AG04449 (cell line): ENCODE measurements at regions of chr6 and their contacts with region 1.

Region 1: DNA sequence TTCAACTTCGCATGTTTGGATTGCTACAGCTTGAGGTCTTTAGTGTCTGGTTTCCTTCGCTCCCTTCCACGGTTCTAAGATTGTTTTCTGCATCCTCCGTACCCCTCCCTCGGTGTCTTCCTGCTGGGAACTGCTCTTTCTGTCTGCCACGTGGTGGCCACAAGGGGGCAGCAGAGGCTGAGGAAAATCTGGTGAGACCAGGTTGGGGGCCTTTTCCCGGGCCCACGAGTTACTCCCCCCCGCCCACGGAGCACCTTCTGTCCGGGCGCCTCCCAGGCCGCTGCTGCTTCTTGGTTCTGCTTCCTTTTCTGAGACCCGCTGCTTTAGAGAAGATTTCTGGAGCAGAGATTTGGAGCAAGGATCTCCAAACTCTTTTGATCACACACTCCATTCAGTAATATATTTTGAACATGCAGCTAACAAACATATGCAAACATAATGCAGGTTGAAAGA is 21.1 kb upstream of the NOTCH4 start:
- DNase-seq: no peak
- H3K4me3 ChIP-seq: no peak overlapping the region
- CTCF ChIP-seq: peak; percentile 85

Region 2: GRCh38 chr6:32234934-32235333 is 10.0 kb before region 1 on chr6:
- CTCF ChIA-PET with region 1: interaction called, 18 read pairs
- POLR2A ChIA-PET with region 1: no interaction called
- DNase-seq: no peak
- H3K4me3 ChIP-seq: no peak overlapping the region
- CTCF ChIP-seq: no peak

Region 3: GRCh38 chr6:32255199-32256153 is 10.5 kb after region 1 on chr6:
- CTCF ChIA-PET with region 1: interaction called, 60 read pairs
- POLR2A ChIA-PET with region 1: no interaction called
- DNase-seq: peak; percentile 59
- H3K4me3 ChIP-seq: peak overlapping the region; percentile 53
- CTCF ChIP-seq: peak; percentile 89

Region 4: DNA sequence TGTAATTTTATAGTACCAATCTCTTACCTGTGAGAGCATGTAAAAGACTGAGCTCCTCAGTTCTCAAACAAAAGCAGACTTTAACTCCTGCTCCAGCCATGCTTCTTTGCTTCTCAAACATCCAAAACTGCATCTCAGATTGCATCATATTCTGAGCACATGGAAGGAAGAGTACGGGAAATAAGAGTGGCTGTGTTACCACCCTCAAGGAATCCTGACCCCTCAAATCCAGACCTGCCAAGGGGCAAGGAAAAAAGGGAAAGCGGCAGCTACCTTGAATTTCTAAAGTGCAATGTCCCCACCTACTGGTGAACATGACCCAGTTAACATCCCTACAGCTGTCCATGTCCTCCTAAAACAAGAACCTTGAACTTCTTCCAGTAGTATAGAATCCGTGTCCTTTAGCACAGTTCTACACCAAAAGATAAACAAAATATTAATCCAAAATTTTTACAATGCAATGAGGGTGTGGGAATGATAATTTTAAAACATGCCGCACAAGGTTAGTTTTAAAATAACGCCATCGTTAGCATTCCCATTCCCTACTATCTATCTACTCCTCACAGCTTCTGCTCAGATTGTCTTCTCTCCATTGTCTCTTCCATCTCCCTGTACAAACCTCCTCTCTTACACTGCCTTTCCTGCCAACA is 455.5 kb after region 1 on chr6:
- CTCF ChIA-PET with region 1: interaction called, 10 read pairs
- POLR2A ChIA-PET with region 1: no interaction called
- DNase-seq: no peak
- H3K4me3 ChIP-seq: no peak overlapping the region
- CTCF ChIP-seq: peak; percentile 57

Region 5: GRCh38 chr6:32785781-32786533 is 541.0 kb after region 1 on chr6:
- CTCF ChIA-PET with region 1: interaction called, 11 read pairs
- POLR2A ChIA-PET with region 1: no interaction called
- DNase-seq: no peak
- H3K4me3 ChIP-seq: no peak overlapping the region
- CTCF ChIP-seq: peak; percentile 55